B cell (primary cell): ENCODE measurements at regions of chr4 and their contacts with region 1.

Region 1: GRCh38 chr4:169485791-169486742 is 126.3 kb downstream of the NEK1 start:
- DNase-seq: peak; percentile 57
- ATAC-seq: peak; percentile 43
- H3K4me3 ChIP-seq: no peak overlapping the region
- H3K4me3 Mint-ChIP-seq: no peak overlapping the region
- H3K27ac ChIP-seq: no peak overlapping the region
- H3K27ac Mint-ChIP-seq: no peak overlapping the region
- H3K4me1 ChIP-seq: no peaks in the 10 kb centered on the region
- H3K4me1 Mint-ChIP-seq: no peaks in the 10 kb centered on the region
- H3K27me3 ChIP-seq: no peaks in the 10 kb centered on the region
- H3K27me3 Mint-ChIP-seq: no peaks in the 10 kb centered on the region
- CTCF ChIP-seq: peak; percentile 74

Region 2: GRCh38 chr4:168183717-168184608 is 1302.1 kb before region 1 on chr4:
- CTCF ChIA-PET with region 1: no interaction called
- POLR2A ChIA-PET with region 1: no interaction called
- intact Hi-C with region 1: loop called (anchors 2 kb)
- DNase-seq: peak; percentile 12
- ATAC-seq: no peak
- H3K4me3 ChIP-seq: no peak overlapping the region
- H3K4me3 Mint-ChIP-seq: no peak overlapping the region
- H3K27ac ChIP-seq: no peak overlapping the region
- H3K27ac Mint-ChIP-seq: no peak overlapping the region
- H3K4me1 ChIP-seq: peaks cover 0 to 3% of the 10 kb centered on the region in 2 donors
- H3K4me1 Mint-ChIP-seq: peaks cover 6% of the 10 kb centered on the region
- H3K27me3 ChIP-seq: no peaks in the 10 kb centered on the region
- H3K27me3 Mint-ChIP-seq: no peaks in the 10 kb centered on the region
- CTCF ChIP-seq: peak; percentile 52

Region 3: DNA sequence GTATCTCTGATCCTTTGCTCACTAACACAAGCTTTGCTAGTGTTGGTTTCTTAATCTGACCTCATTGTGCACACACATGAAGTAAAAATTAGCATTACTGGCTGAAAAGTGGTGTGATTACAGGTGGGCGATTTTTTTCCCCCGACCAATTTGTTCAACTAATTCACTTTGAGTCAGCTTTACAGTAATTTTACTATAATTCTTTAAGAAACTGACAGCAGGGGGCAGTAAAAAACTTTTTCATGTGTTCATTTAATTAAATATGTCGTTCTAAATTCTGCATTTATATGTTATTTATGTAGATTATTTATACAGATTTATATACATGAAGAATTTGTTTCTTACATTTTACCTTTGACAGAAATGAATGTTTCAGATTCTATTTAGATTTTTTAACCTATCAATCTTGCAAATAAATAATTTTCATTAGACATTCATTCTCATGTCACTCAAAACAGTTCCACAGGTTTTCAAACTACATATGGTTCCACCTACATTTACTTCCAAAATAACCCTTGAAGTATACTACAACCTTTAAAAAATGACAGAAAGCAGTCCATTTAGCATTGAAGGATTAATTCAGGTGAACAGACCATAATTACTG is 971.7 kb before region 1 on chr4:
- CTCF ChIA-PET with region 1: interaction called, 3 read pairs
- POLR2A ChIA-PET with region 1: no interaction called
- intact Hi-C with region 1: loop called (anchors 10 kb)
- DNase-seq: peak; percentile 34
- ATAC-seq: no peak
- H3K4me3 ChIP-seq: no peak overlapping the region
- H3K4me3 Mint-ChIP-seq: no peak overlapping the region
- H3K27ac ChIP-seq: no peak overlapping the region
- H3K27ac Mint-ChIP-seq: no peak overlapping the region
- H3K4me1 ChIP-seq: no peaks in the 10 kb centered on the region
- H3K4me1 Mint-ChIP-seq: peaks cover 2% of the 10 kb centered on the region
- H3K27me3 ChIP-seq: no peaks in the 10 kb centered on the region
- H3K27me3 Mint-ChIP-seq: peaks cover 3% of the 10 kb centered on the region
- CTCF ChIP-seq: peak; percentile 73

Region 4: DNA sequence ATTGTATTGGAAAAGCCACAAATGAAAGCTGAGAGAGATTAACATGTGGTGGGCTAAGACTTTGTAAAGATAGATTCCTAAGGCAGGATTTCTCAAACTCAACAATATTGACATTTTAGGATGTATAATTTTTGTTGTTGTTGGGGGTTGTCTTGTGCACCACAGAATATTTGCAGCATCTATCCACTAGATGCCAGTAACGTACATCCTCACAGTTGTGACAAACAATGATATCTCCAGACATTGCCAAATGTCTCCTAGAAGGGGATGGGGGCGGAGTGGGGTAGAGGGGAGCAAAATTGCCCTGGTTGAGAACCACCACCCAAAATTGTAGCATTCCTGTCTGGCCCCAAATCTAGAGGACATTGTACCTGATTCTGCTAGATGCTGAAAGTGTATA is 461.3 kb before region 1 on chr4:
- CTCF ChIA-PET with region 1: interaction called, 11 read pairs
- POLR2A ChIA-PET with region 1: no interaction called
- intact Hi-C with region 1: loop called (anchors 1 kb)
- DNase-seq: peak; percentile 21
- ATAC-seq: peak; percentile 36
- H3K4me3 ChIP-seq: no peak overlapping the region
- H3K4me3 Mint-ChIP-seq: no peak overlapping the region
- H3K27ac ChIP-seq: no peak overlapping the region
- H3K27ac Mint-ChIP-seq: no peak overlapping the region
- H3K4me1 ChIP-seq: no peaks in the 10 kb centered on the region
- H3K4me1 Mint-ChIP-seq: no peaks in the 10 kb centered on the region
- H3K27me3 ChIP-seq: no peaks in the 10 kb centered on the region
- H3K27me3 Mint-ChIP-seq: peaks cover 4% of the 10 kb centered on the region
- CTCF ChIP-seq: peak; percentile 41

Region 5: DNA sequence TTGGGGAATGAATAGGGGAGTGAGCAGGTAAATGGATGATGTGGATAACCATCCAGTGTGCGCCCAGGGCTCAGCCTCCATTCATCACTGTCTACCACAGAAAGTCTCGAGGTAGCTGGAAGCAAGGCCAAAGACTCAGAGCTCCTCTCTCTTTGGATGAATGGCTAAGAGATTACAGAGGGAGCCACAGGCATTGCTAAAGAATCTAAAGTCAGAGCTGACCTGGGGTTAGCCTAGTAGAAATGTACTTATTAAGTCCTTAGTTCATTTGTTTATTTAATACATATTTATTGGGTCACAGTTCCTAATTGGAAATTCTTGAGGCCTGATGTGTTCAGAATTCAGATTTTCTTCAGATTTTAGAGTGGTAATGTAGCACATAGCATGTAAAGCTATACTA is 360.3 kb after region 1 on chr4:
- CTCF ChIA-PET with region 1: no interaction called
- POLR2A ChIA-PET with region 1: no interaction called
- intact Hi-C with region 1: no loop called
- DNase-seq: no peak
- ATAC-seq: no peak
- H3K4me3 ChIP-seq: no peak overlapping the region
- H3K4me3 Mint-ChIP-seq: no peak overlapping the region
- H3K27ac ChIP-seq: no peak overlapping the region
- H3K27ac Mint-ChIP-seq: no peak overlapping the region
- H3K4me1 ChIP-seq: no peaks in the 10 kb centered on the region
- H3K4me1 Mint-ChIP-seq: no peaks in the 10 kb centered on the region
- H3K27me3 ChIP-seq: peaks cover 0 to 3% (median 0%) of the 10 kb centered on the region in 4 experiments
- H3K27me3 Mint-ChIP-seq: peaks cover 26% of the 10 kb centered on the region
- CTCF ChIP-seq: no peak